Activated T-helper 1 cell treated with anti-CD3 and anti-CD28 coated beads, Interleukin-12 subunit alpha, Interleukin-12 subunit beta, Interleukin-2, Interleukin-4 antibody, amounts not matched to agents 30 ng/mL and 10 ng/mL and 1 ng/mL, durations not matched to agents 14 hours and 24 hours and 36 hours (primary cell): ENCODE measurements at regions of chr2 and their contacts with region 1.

Region 1: DNA sequence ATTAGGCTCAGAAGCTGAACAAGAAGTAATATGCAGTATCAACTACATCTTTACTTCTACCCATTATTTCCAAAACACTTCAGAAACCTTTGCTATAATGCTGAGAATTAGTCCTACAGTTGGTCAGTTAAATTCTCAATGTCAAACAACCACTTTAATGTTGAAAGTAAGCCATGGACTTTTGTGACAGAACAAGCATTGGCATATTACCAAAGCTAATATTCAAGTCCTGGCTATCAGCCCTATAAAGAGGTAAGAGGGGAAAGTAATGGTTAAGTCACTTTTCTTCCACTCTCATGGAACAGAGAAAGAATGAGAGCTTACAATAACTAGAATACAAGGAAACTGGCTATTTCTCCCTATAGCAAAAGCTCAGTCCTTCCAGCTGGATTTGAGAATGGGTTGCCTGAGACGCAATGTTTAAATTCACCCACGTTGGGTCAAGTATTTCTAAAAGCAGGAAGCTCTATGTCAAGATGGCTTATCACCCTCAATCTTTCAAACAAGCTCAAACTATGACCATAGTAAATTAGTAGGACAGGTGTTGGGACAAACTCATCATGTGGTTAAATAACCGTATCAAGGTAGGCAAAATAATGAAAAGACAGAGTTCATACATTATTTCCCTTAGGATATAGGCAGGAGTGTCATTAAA is 31.4 kb upstream of the MFSD6 start:
- DNase-seq: no peak
- H3K4me3 Mint-ChIP-seq: no peak overlapping the region
- H3K27ac Mint-ChIP-seq: no peak overlapping the region
- H3K4me1 Mint-ChIP-seq: no peaks in the 10 kb centered on the region
- H3K27me3 Mint-ChIP-seq: peaks cover 2% of the 10 kb centered on the region

Region 2: GRCh38 chr2:190338453-190338852 is 38.3 kb before region 1 on chr2:
- intact Hi-C with region 1: loop called (anchors 1 kb)
- DNase-seq: no peak
- H3K4me3 Mint-ChIP-seq: no peak overlapping the region
- H3K27ac Mint-ChIP-seq: no peak overlapping the region
- H3K4me1 Mint-ChIP-seq: peaks cover 12% of the 10 kb centered on the region
- H3K27me3 Mint-ChIP-seq: peaks cover 30% of the 10 kb centered on the region

Region 3: GRCh38 chr2:190343500-190344275 is 33.0 kb before region 1 on chr2 and contains the start of gene INPP1:
- intact Hi-C with region 1: loop called (anchors 1 kb)
- DNase-seq: peak; percentile 29
- H3K4me3 Mint-ChIP-seq: peak within 1 kb of the TSS; percentile 87
- H3K27ac Mint-ChIP-seq: peak within 1 kb of the TSS; percentile 88
- H3K4me1 Mint-ChIP-seq: peaks cover 27% of the 10 kb centered on the region
- H3K27me3 Mint-ChIP-seq: peaks cover 17% of the 10 kb centered on the region
- total RNA-seq, gene INPP1: 7.7 and 9.8 TPM in 2 replicates

Region 4: GRCh38 chr2:190432567-190433231 is 56.0 kb after region 1 on chr2:
- intact Hi-C with region 1: no loop called
- DNase-seq: no peak
- H3K4me3 Mint-ChIP-seq: no peak overlapping the region
- H3K27ac Mint-ChIP-seq: peak overlapping the region; percentile 41
- H3K4me1 Mint-ChIP-seq: peaks cover 54% of the 10 kb centered on the region
- H3K27me3 Mint-ChIP-seq: no peaks in the 10 kb centered on the region

Region 5: DNA sequence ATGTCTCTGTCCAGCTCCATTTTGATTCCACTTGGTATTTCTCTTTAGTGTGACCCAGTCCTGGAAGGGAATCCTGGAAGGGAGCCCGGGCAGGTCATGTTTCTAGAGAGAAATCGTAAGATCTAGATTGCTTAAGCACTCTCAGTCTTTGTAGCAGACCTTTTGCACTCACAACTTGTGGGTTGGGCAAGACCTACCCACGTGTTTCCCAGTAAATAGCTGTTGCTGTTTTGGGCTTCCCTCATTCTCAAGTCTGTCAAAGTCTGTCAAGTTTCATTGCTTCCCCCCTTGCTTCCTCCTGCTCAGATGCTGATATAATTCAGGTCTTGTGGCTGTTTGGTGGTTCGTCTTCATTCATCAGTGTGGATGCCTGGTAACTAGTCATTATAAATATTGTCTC is 175.2 kb after region 1 on chr2:
- intact Hi-C with region 1: no loop called
- DNase-seq: no peak
- H3K4me3 Mint-ChIP-seq: peak overlapping the region; percentile 62
- H3K27ac Mint-ChIP-seq: no peak overlapping the region
- H3K4me1 Mint-ChIP-seq: peaks cover 24% of the 10 kb centered on the region
- H3K27me3 Mint-ChIP-seq: no peaks in the 10 kb centered on the region